ENCODE measurements at regions of chr1 and their contacts with region 1.

Region 1: GRCh38 chr1:154479764-154480421 is 22.1 kb upstream of the TDRD10 start:
- DNase-seq: peak; percentile 52
- ATAC-seq: peak; percentile 88 to 94

Region 2: GRCh38 chr1:154548028-154548427 is 68.1 kb after region 1 on chr1:
- intact Hi-C with region 1: loop called (anchors 2 to 5 kb)
- DNase-seq: no peak
- ATAC-seq: peak; percentile 60 to 62

Region 3: GRCh38 chr1:154553056-154554030 is 73.5 kb after region 1 on chr1:
- intact Hi-C with region 1: loop called (anchors 2 to 5 kb)
- DNase-seq: no peak
- ATAC-seq: no peak

Measured in left cardiac atrium (tissue), 4 donors.